Breast epithelium (tissue), 4 donors: ENCODE measurements at regions of chr9 and their contacts with region 1.

Region 1: DNA sequence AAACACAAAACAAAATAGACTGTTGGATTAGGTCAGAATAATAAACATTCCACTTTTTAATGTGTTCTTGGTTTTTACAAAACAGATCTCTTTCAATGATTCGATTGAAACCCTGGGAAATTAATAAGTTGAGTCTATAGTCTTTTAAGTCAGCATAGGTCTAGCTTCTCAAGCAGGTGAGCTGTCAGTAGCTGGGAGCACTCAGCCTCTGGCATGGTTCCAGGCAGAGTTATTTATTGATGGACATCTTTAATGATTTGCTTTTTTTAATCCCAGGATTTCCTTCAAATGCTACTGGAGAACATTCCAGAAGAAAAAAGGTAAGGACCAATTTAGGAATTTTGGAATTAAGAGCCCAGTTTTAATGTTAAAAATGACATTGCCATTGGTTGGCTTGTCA is 241.0 kb downstream of the AOPEP start:
- DNase-seq: no peak
- H3K4me3 ChIP-seq: no peak overlapping the region
- H3K27ac ChIP-seq: no peak overlapping the region
- H3K4me1 ChIP-seq: no peaks in the 10 kb centered on the region
- H3K27me3 ChIP-seq: no peaks in the 10 kb centered on the region
- CTCF ChIP-seq: no peak
- POLR2A ChIP-seq: no peak

Region 2: DNA sequence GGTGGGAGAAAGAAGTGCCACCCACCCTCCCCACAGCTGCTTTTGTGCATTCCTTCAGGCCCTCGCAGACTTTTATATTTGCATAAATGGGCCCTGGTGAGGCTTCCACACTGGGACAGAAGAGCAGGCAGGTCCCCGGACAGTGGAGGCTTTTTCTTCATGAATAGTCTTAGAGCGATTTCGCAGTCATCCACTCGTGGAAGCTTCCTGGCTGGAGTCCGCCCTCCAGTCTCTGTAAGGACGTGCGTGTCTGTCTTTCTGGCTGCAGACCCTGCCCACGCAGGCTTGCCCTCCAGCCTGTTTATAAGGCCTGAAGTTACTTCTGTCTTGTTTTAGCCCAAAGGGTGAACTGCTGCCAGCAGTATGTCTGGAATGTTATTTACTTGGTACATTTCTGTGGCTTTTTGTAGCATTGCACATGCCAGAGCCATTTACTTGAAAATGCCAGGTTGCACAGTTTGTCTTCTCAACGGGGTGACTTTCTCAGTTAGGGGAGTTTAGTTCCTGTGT is 45.3 kb before region 1 on chr9:
- intact Hi-C with region 1: loop called (anchors 1 kb)
- DNase-seq: peak in 1 of 2 donors; percentile 83
- H3K4me3 ChIP-seq: no peak overlapping the region
- H3K27ac ChIP-seq: peak overlapping the region; percentile 78 to 83
- H3K4me1 ChIP-seq: peaks cover 8 to 12% of the 10 kb centered on the region in 2 donors
- H3K27me3 ChIP-seq: no peaks in the 10 kb centered on the region
- CTCF ChIP-seq: no peak
- POLR2A ChIP-seq: no peak